Breast epithelium (tissue), 4 donors: ENCODE measurements at regions of chr2 and their contacts with region 1.

Region 1: DNA sequence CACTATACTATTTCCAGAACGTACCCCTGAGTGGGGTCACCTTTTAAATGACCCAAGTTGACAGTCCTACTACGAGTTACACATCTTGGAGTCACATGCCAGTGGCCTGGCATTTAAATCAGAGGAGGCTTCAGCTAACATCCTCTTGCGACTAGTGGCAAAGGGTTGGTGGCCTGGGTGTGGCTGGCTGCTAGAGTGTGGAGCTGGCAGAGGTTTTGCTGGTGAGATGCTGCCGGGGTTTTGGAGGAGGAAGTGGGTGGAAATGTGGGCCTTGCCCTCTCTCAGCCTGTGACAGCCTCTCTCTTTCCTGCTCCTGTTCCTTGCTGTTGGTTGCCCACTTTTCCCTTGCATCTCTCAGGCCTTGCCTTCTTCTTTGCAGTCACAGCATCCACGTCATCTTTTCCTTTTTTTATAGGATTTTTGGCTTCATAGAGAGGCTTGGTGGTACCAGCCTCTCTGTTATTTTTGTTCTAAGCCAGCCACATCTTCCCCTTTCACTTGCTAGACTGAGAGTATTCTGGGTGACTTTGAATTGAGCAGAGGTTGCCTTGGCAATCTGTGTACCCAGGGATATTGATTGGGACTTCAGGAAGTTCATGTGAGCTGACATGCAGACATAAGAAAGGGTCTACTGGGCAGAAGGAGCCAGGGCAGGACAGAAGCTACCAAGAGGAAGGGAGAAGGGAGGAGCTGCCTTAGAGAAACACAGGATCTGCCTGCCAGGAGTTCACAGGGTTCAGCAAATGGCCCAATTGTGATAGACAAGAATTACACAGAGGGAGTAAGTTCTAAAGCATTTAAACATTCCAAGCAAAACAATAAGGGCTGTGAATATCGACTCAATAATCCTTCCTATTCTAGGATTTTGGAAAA is 55.4 kb downstream of the CDC42EP3 start:
- DNase-seq: no peak
- H3K4me3 ChIP-seq: no peak overlapping the region
- H3K27ac ChIP-seq: no peak overlapping the region
- H3K4me1 ChIP-seq: no peaks in the 10 kb centered on the region
- H3K27me3 ChIP-seq: no peaks in the 10 kb centered on the region
- CTCF ChIP-seq: no peak
- POLR2A ChIP-seq: no peak

Region 2: GRCh38 chr2:37561615-37562569 is 54.1 kb before region 1 on chr2:
- intact Hi-C with region 1: no loop called
- DNase-seq: no peak
- H3K4me3 ChIP-seq: no peak overlapping the region
- H3K27ac ChIP-seq: no peak overlapping the region
- H3K4me1 ChIP-seq: no peaks in the 10 kb centered on the region
- H3K27me3 ChIP-seq: no peaks in the 10 kb centered on the region
- CTCF ChIP-seq: no peak
- POLR2A ChIP-seq: no peak

Region 3: DNA sequence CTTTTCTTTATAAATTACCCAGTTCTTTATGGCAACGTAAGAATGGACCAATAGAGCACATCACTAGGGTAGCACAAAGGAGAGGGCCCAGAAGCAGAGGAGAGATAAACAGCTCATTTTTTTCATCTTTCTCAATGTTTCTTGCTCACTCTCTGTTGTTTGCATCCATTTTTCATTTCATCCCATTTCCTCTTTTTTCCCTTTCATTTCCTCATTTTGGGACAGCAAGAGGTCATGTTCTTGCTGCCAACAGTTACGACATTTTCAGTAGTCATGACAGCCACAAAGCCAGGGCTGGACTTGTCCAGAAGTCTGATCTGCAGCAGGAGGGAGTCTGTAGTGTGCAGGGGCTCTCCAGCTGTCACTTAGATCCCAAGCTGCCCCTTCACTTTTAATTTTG is 512.6 kb after region 1 on chr2:
- intact Hi-C with region 1: loop called (anchors 10 kb)
- DNase-seq: no peak
- H3K4me3 ChIP-seq: no peak overlapping the region
- H3K27ac ChIP-seq: peak overlapping the region; percentile 36 to 80
- H3K4me1 ChIP-seq: no peaks in the 10 kb centered on the region
- H3K27me3 ChIP-seq: no peaks in the 10 kb centered on the region
- CTCF ChIP-seq: no peak
- POLR2A ChIP-seq: no peak